Uterus (tissue), 4 donors: ENCODE measurements at regions of chr11 and their contacts with region 1.

Region 1: DNA sequence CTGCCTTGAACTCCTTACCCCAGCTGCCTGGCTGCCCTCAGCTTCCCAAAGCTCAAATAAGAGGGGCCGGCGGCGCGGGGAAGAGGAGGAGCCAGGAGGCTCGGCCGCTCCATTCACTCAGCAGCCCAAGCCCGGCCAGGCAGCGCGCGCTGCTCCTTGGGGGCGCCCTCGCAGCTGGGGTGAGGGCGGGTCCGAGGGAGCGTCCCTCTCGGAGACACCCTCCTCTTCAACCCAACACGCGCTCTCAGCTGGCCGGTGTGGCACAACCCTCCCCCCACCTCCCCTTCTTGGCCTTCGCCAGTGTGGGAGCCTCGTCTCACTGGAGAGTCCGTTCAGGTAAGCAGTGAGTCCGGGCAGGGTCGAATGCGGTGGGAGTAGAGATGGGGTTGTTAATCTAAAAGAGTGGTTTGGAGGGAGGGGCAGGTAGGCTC is at the start of gene WT1:
- DNase-seq: peak; percentile 90 to 91
- H3K4me3 ChIP-seq: peak within 1 kb of the TSS; percentile 72 to 86
- H3K27ac ChIP-seq: peak within 1 kb of the TSS; percentile 98 to 99
- H3K4me1 ChIP-seq: no peaks in the 10 kb centered on the region
- H3K27me3 ChIP-seq: no peaks in the 10 kb centered on the region
- CTCF ChIP-seq: peak in 2 of 4 experiments; percentile 4 to 8
- POLR2A ChIP-seq: peak; percentile 55 to 81
- total RNA-seq, gene WT1: 51.2 to 125 (median 53.6) TPM

Region 2: DNA sequence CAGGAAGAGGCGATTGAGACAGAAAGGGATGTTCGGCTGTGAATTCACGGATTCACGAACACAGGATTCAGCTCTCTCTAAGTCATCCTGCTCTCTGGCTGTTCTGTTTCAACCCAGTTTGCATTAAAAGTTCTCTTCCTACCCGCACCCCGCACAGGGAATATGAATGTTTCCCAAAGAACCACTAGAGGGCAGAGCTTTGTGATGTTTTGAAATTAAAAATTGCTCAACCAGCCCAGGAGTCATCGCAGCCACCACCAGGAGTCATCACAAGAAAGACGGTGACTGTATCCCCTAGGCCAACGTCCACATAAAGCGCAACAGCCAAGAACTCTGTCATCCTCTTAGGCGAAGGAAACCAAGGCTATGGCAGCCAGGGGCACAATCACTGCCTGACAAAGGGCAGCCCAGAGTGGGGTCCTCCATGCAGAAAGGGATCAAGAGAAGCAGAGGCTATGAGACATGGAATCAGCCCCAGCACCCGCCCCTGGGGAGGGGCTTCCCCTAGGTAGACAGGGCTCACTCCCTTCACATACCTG is 122.6 kb before region 1 on chr11:
- intact Hi-C with region 1: loop called (anchors 10 kb)
- DNase-seq: peak; percentile 54 to 70
- H3K4me3 ChIP-seq: peak overlapping the region in 1 of 2 donors; percentile 16
- H3K27ac ChIP-seq: peak overlapping the region; percentile 78 to 83
- H3K4me1 ChIP-seq: no peaks in the 10 kb centered on the region
- H3K27me3 ChIP-seq: no peaks in the 10 kb centered on the region
- CTCF ChIP-seq: peak; percentile 55 to 72 (median 68)
- POLR2A ChIP-seq: no peak

Region 3: DNA sequence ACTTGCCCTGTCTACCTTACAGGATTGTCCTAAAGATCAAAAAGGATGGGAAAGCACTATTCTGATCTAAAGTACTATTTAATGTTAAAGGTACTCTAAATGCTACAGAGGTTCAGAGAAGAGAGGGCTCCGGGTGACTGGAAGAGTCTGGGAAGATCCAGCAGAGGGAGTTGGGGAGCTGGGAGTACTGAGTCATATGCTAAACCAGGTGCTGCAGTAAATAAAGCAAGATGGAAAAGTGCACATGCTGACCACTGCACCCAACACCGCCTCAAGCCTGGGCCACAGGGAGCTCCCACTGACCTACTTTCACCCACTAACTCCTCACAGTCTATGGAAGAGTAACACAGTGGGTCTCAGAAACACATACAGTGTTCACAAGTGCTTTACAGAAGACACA is 49.5 kb before region 1 on chr11:
- intact Hi-C with region 1: loop called (anchors 10 kb)
- DNase-seq: peak; percentile 41 to 61
- H3K4me3 ChIP-seq: no peak overlapping the region
- H3K27ac ChIP-seq: peak overlapping the region; percentile 73 to 80
- H3K4me1 ChIP-seq: peaks cover 10 to 11% of the 10 kb centered on the region in 2 donors
- H3K27me3 ChIP-seq: no peaks in the 10 kb centered on the region
- CTCF ChIP-seq: peak; percentile 18 to 57 (median 36)
- POLR2A ChIP-seq: no peak

Region 4: GRCh38 chr11:32561835-32562234 is 126.3 kb after region 1 on chr11:
- intact Hi-C with region 1: no loop called
- DNase-seq: no peak
- H3K4me3 ChIP-seq: no peak overlapping the region
- H3K27ac ChIP-seq: no peak overlapping the region
- H3K4me1 ChIP-seq: no peaks in the 10 kb centered on the region
- H3K27me3 ChIP-seq: no peaks in the 10 kb centered on the region
- CTCF ChIP-seq: no peak
- POLR2A ChIP-seq: no peak